ENCODE measurements at regions of chr5 and their contacts with region 1.

Region 1: DNA sequence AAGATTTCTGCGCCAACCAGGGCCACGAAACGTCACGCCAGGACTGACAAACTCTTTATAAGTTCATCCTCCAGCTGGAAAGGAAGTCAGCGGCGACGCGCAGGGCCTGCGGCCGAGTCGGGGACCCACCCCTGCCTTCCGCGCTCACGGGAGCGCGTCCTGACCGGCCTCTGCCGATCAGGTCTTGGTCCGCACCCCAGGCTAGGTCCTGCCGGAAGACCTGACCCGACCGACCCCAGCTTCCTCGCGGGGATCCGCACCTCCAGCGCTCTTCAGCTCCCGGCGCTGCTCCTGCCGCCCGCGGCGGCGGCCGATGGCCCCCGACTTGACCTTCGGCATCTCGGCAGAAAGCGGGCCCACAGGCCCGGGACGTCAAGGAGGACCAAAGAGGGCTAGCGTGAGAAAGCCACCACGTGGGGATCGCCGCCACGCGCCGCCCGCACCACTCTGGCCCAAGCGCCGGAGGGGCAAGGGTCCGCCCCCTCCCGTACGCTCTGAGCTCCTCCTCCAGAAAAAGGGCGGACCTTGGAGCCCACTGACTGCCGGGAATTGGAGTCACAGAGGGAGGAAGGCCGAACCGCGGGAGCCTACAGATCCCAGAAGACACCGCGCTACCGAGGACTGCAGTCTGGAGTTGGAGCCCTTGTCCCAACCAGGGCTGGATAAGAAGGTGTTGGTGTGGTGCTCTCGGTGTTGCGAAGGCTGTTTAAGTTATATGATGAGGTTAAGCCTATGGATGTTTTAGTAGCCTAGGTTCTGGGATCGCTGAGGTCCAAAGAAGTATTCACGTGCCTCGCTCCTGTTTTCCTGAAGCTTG is at the start of gene DIMT1:
- DNase-seq: peak; percentile 93 to 95
- H3K4me3 ChIP-seq: peak within 1 kb of the TSS; percentile 74
- H3K27ac ChIP-seq: peak within 1 kb of the TSS; percentile 71
- H3K4me1 ChIP-seq: peaks cover 21% of the 10 kb centered on the region
- H3K27me3 ChIP-seq: no peaks in the 10 kb centered on the region
- CTCF ChIP-seq: no peak
- total RNA-seq, gene DIMT1: 17.7 and 20.8 TPM in 2 replicates

Region 2: DNA sequence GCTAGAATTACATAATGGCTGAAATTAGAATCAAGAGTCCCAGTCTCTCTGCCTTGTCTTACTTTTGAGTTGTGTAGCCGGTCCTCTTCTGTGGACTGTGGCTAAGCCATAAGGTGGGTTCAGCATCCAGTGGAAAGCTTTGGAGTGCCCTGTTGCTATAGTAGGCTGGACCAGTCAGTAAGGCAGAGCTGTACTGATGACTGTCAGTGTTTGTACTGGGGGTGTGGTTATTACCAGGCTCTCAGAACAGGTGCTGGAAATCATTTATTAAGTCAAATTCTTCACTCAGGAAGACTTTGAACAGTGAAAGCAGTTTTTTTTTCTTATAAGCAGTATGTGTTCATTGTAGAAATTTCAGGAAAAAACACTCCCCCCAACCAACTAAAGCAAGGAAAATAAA is 942.2 kb before region 1 on chr5:
- CTCF ChIA-PET with region 1: no interaction called
- POLR2A ChIA-PET with region 1: interaction called, 10 read pairs
- intact Hi-C with region 1: no loop called
- DNase-seq: no peak
- H3K4me3 ChIP-seq: no peak overlapping the region
- H3K27ac ChIP-seq: no peak overlapping the region
- H3K4me1 ChIP-seq: no peaks in the 10 kb centered on the region; the same call in 1 of the 2 replicates
- H3K27me3 ChIP-seq: no peaks in the 10 kb centered on the region
- CTCF ChIP-seq: no peak

Region 3: DNA sequence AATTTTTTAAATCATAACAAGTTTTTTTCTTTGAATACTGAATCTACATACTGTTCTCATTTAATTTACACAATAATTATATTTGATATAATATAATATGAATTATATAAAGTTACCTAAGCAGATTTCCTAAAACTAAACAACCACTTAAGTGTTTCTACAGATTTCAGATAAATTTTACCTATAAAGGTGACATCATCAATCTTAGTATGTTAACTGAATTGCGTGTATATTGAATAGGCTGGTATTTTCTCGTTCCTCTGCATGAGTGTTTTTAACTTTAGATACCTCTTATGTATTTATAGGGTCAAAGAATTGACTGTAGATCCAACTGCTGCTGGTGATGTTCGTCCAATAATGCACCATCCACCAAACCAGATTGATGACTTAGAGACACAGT is 30.3 kb before region 1 on chr5:
- CTCF ChIA-PET with region 1: no interaction called
- POLR2A ChIA-PET with region 1: no interaction called
- intact Hi-C with region 1: no loop called
- DNase-seq: no peak
- H3K4me3 ChIP-seq: no peak overlapping the region
- H3K27ac ChIP-seq: no peak overlapping the region
- H3K4me1 ChIP-seq: peaks cover 15% of the 10 kb centered on the region
- H3K27me3 ChIP-seq: no peaks in the 10 kb centered on the region
- CTCF ChIP-seq: no peak

Region 4: DNA sequence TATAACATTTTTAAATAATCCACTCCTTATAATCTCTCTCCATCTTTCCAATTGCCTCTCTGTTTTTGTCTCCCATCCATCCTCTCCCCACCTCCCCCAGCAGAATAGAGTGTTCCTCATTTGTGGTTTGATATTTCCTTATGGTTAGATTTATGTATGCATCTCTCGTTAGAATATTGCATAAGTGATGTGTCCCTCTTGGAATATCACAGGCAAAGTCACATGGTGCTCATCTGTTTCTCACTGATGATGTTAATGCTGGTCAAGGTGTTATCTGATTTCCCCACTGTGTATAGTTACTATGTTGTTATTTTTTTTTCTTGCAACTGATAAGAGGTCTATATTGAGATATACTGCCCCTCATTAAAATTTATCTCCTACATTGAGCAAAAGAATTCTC is 171.8 kb after region 1 on chr5:
- CTCF ChIA-PET with region 1: no interaction called
- POLR2A ChIA-PET with region 1: no interaction called
- intact Hi-C with region 1: no loop called
- DNase-seq: no peak
- H3K4me3 ChIP-seq: no peak overlapping the region
- H3K27ac ChIP-seq: no peak overlapping the region
- H3K4me1 ChIP-seq: no peaks in the 10 kb centered on the region
- H3K27me3 ChIP-seq: no peaks in the 10 kb centered on the region
- CTCF ChIP-seq: no peak